Cardiac septum (tissue), 1 donor: ENCODE measurements at regions of chr1 and their contacts with region 1.

Region 1: GRCh38 chr1:19704247-19705113 is 39.8 kb downstream of the HTR6 start:
- DNase-seq: no peak

Region 2: GRCh38 chr1:19661721-19662228 is 42.7 kb before region 1 on chr1:
- intact Hi-C with region 1: loop called (anchors 2 kb)
- DNase-seq: no peak